K562 (cell line): ENCODE measurements at regions of chr3 and their contacts with region 1.

Region 1: DNA sequence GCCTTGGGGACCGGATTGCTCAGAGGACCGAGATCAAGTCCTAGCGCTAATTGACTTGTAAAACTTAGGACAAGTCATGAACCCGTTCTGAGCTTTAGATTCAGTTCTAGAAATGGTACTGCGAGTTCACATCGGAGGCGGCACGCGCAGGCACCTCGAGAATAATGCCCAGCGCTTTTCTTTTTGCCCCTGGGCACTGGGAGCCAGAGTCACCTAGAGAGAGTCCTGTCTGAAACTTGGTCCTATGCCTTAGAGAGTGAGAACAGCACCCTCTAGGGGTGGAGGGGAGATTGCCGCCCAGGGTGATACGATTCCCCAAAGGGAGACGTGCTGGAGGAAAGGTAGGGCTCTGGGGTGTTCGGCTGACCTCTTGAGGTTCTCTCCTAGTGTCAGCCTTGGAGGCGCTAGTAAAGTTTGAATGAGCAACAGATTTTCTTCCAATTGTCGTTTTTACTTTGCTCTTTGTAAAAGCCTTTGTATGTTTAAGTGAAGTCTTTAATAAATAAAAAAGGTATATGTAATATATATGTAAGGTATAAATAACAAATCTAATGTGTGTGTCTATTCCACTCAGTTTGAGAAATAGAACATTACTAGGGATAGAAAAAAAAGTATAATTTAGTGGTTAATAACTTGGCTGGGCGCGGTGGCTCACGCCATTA is 826 bp downstream of the EEF1AKMT4 start:
- DNase-seq: peak; percentile 72 to 97 (median 82)
- ATAC-seq: peak; percentile 86
- H3K4me3 ChIP-seq: peak overlapping the region; percentile 96
- H3K27ac ChIP-seq: peak overlapping the region; percentile 95
- H3K4me1 ChIP-seq: peaks cover 3 to 9% of the 10 kb centered on the region in 2 experiments; a peak in 3 of 5 replicates
- H3K27me3 ChIP-seq: no peaks in the 10 kb centered on the region
- CTCF ChIP-seq: peak; percentile 93 to 97 (median 97)
- EP300 ChIP-seq: no peak; the same call in 1 of the 2 replicates
- POLR2A ChIP-seq: no peak
- RAD21 ChIP-seq: peak; percentile 63 to 74

Region 2: GRCh38 chr3:183122257-183122932 is 1127.9 kb before region 1 on chr3:
- CTCF ChIA-PET with region 1: no interaction called
- POLR2A ChIA-PET with region 1: no interaction called
- in situ Hi-C with region 1: no loop called
- intact Hi-C with region 1: no loop called
- DNase-seq: peak; percentile 54 to 67 (median 56)
- ATAC-seq: peak; percentile 73
- H3K4me3 ChIP-seq: no peak overlapping the region
- H3K27ac ChIP-seq: no peak overlapping the region
- H3K4me1 ChIP-seq: no peaks in the 10 kb centered on the region
- H3K27me3 ChIP-seq: peaks cover 0 to 5% of the 10 kb centered on the region in 2 experiments; a peak in 1 of 5 replicates
- CTCF ChIP-seq: peak; percentile 65 to 91 (median 69); a peak in 5 of 6 replicates
- EP300 ChIP-seq: no peak
- POLR2A ChIP-seq: no peak
- RAD21 ChIP-seq: peak; percentile 93

Region 3: GRCh38 chr3:183895296-183895695 is 355.0 kb before region 1 on chr3:
- CTCF ChIA-PET with region 1: interaction called, 9 read pairs
- POLR2A ChIA-PET with region 1: interaction called, 3 read pairs
- in situ Hi-C with region 1: no loop called
- intact Hi-C with region 1: loop called (anchors 2 kb)
- DNase-seq: peak; percentile 63 to 80 (median 76)
- ATAC-seq: peak; percentile 85
- H3K4me3 ChIP-seq: no peak overlapping the region
- H3K27ac ChIP-seq: no peak overlapping the region
- H3K4me1 ChIP-seq: 0 out of 5 replicates have a peak, but pooled peaks cover 0 to 3% of the 10 kb centered on the region in 2 experiments
- H3K27me3 ChIP-seq: peaks cover 19 to 35% of the 10 kb centered on the region in 2 experiments; a peak in 4 of 5 replicates
- CTCF ChIP-seq: peak; percentile 79 to 95 (median 83)
- EP300 ChIP-seq: no peak
- POLR2A ChIP-seq: no peak
- RAD21 ChIP-seq: peak; percentile 79 to 80

Region 4: GRCh38 chr3:184017672-184018423 is 232.4 kb before region 1 on chr3 and contains the start of gene ABCC5:
- CTCF ChIA-PET with region 1: interaction called, 3 read pairs
- POLR2A ChIA-PET with region 1: no interaction called
- in situ Hi-C with region 1: loop called (anchors 10 kb)
- intact Hi-C with region 1: loop called (anchors 5 kb)
- DNase-seq: peak; percentile 85 to 95 (median 89)
- ATAC-seq: peak; percentile 95
- H3K4me3 ChIP-seq: peak within 1 kb of the TSS; percentile 89
- H3K27ac ChIP-seq: peak within 1 kb of the TSS; percentile 90
- H3K4me1 ChIP-seq: peaks cover 20 to 25% of the 10 kb centered on the region in 2 experiments; a peak in 4 of 5 replicates
- H3K27me3 ChIP-seq: no peaks in the 10 kb centered on the region
- CTCF ChIP-seq: 0 out of 6 replicates have a peak, but pooled peaks of 1 of the 3 experiments have one; percentile 21
- EP300 ChIP-seq: peak; percentile 91
- POLR2A ChIP-seq: peak; percentile 85
- RAD21 ChIP-seq: no peak
- polyA plus RNA-seq, gene ABCC5: 41.9 to 53.0 TPM

Region 5: DNA sequence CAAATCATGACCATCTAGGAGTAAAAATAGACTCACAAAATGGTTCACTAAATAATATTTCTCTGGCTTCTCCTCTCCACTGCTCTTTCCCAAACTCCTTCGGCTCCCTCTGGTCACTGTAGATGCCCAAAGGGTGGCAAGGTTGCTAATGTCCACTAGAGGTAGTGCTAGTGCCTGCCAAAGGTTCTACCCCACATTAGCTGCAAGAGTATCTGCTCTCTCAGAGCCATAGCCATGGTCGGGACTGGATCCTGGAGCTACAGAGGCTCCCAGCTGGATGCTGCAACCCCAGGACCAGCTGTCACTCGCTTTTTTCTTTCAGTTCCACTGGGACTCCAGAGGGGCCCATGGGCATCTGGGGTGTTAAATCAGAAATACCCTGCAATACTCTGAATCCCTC is 210.3 kb before region 1 on chr3:
- CTCF ChIA-PET with region 1: no interaction called
- POLR2A ChIA-PET with region 1: no interaction called
- in situ Hi-C with region 1: no loop called
- intact Hi-C with region 1: loop called (anchors 10 kb)
- DNase-seq: peak; percentile 22 to 53 (median 34)
- ATAC-seq: peak; percentile 94
- H3K4me3 ChIP-seq: no peak overlapping the region
- H3K27ac ChIP-seq: no peak overlapping the region
- H3K4me1 ChIP-seq: no peaks in the 10 kb centered on the region
- H3K27me3 ChIP-seq: peaks cover 0 to 5% of the 10 kb centered on the region in 2 experiments; a peak in 2 of 5 replicates
- CTCF ChIP-seq: peak; percentile 66 to 79 (median 68)
- EP300 ChIP-seq: no peak
- POLR2A ChIP-seq: no peak
- RAD21 ChIP-seq: peak; percentile 79 to 82

Region 6: DNA sequence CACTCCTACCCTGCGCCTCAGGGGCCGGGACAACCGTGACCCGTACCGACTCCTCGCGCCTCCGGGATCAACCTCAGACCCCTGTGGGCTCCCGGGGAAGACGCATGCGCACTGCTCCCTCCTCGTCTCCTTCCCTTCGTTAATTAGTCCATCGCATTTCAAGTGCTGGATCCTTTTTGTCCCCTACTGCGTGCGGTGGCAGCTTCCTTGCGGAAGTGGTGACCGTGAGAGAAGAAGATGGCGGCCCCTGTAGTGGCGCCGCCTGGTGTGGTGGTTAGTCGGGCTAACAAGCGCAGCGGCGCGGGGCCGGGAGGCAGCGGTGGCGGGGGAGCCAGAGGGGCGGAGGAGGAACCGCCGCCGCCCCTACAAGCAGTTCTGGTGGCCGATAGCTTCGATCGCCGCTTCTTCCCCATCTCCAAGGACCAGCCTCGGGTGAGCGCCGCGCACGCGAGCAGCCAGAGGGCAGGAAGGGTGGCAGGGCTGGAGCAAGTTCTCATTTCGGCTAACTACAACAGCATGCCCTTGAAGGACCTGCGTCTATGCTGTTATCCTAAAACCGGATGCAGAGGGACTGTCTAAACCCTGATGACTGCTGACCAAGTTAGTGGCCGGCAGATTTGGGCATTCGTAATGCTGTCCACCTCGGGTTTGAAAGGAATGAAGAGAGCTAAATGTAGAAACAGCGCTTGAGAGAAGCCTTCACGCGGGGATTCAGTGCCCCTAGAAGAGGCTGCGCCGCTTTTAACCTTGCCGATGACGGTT is 115.0 kb before region 1 on chr3 and contains the start of gene EIF2B5:
- CTCF ChIA-PET with region 1: no interaction called
- POLR2A ChIA-PET with region 1: no interaction called
- in situ Hi-C with region 1: no loop called
- intact Hi-C with region 1: loop called (anchors 5 kb)
- DNase-seq: peak; percentile 90 to 96 (median 92)
- ATAC-seq: peak; percentile 90
- H3K4me3 ChIP-seq: peak within 1 kb of the TSS; percentile 97
- H3K27ac ChIP-seq: peak within 1 kb of the TSS; percentile 92
- H3K4me1 ChIP-seq: peaks cover 7 to 13% of the 10 kb centered on the region in 2 experiments; a peak in 4 of 5 replicates
- H3K27me3 ChIP-seq: no peaks in the 10 kb centered on the region; a peak in 1 of 5 replicates
- CTCF ChIP-seq: peak; percentile 29 to 49 (median 31); a peak in 5 of 6 replicates
- EP300 ChIP-seq: peak; percentile 51
- POLR2A ChIP-seq: peak; percentile 92
- RAD21 ChIP-seq: peak; percentile 20 to 28; a peak in 3 of 4 replicates
- polyA plus RNA-seq, gene EIF2B5: 19.1 to 31.8 TPM

Region 7: DNA sequence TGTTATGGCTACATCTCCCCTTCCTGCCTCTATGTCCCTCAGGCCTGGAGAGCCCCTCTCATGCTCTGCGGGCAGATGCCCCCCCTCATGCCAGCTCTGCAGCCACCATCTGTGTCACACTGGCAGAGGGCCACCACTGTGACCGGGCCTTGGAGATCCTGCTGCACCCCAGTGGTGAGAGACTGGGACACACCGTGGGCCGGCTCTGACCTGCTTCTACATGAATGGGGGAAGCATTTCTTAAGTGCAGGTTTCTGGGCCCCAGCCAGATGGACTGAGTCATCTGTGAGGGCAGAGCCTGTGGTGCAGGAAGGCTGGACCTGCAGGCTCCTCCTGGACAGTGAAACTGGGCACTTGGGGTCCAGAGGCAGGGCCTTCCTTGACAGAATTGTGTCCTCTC is 16.1 kb before region 1 on chr3:
- CTCF ChIA-PET with region 1: no interaction called
- POLR2A ChIA-PET with region 1: no interaction called
- in situ Hi-C with region 1: no loop called
- intact Hi-C with region 1: no loop called
- DNase-seq: peak; percentile 43 to 68 (median 54)
- ATAC-seq: peak; percentile 77
- H3K4me3 ChIP-seq: no peak overlapping the region
- H3K27ac ChIP-seq: no peak overlapping the region
- H3K4me1 ChIP-seq: peaks cover 0 to 39% of the 10 kb centered on the region in 2 experiments; a peak in 3 of 5 replicates
- H3K27me3 ChIP-seq: peaks cover 32 to 63% of the 10 kb centered on the region in 2 experiments
- CTCF ChIP-seq: peak in 2 of 3 experiments; percentile 13 to 17; a peak in 2 of 6 replicates
- EP300 ChIP-seq: no peak
- POLR2A ChIP-seq: no peak
- RAD21 ChIP-seq: peak in 1 of 2 experiments; percentile 23; a peak in 1 of 4 replicates

Region 8: GRCh38 chr3:184289426-184289938 is 39.2 kb after region 1 on chr3:
- CTCF ChIA-PET with region 1: interaction called, 8 read pairs
- POLR2A ChIA-PET with region 1: no interaction called
- in situ Hi-C with region 1: no loop called
- intact Hi-C with region 1: loop called (anchors 2 kb)
- DNase-seq: peak; percentile 75 to 82 (median 78)
- ATAC-seq: peak; percentile 90
- H3K4me3 ChIP-seq: no peak overlapping the region
- H3K27ac ChIP-seq: no peak overlapping the region
- H3K4me1 ChIP-seq: peaks cover 0 to 12% of the 10 kb centered on the region in 2 experiments; a peak in 2 of 5 replicates
- H3K27me3 ChIP-seq: peaks cover 23 to 47% of the 10 kb centered on the region in 2 experiments
- CTCF ChIP-seq: peak; percentile 84 to 92 (median 84)
- EP300 ChIP-seq: no peak
- POLR2A ChIP-seq: no peak
- RAD21 ChIP-seq: peak; percentile 76 to 87

Region 9: DNA sequence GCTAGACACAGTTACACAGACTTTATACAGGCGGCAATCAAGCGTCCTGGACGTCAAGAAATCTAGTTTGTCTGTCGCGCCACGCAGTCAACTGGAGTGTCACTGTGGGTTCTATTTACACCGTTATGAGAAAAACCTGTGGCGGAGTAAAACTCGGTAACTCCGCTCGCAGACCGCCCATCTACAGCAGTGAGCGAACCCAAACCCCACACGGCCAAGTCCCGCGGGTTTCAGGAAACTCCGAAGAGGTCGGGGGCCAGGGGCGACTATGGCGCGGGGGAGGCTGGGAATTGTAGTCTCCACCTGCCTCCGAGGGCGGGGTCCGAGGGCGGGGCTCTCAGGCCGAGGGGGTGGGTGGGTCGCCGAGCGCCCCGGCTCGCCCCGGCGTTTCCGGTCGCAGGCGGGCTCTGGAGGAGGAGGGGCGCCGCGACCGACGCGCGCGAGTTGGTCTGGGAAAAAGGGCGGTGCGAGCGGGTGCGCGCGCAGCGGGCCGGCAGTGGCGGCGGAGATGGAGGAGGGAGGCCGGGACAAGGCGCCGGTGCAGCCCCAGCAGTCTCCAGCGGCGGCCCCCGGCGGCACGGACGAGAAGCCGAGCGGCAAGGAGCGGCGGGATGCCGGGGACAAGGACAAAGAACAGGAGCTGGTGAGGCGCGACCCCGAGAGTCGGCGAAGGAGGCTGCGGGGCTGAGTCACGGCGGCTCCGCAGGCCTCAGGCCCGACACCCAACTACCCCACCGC is 48.6 kb after region 1 on chr3 and contains the start of gene PSMD2:
- CTCF ChIA-PET with region 1: no interaction called
- POLR2A ChIA-PET with region 1: interaction called, 3 read pairs
- in situ Hi-C with region 1: no loop called
- intact Hi-C with region 1: loop called (anchors 2 kb)
- DNase-seq: peak; percentile 97 to 99 (median 98)
- ATAC-seq: peak; percentile 98
- H3K4me3 ChIP-seq: peak within 1 kb of the TSS; percentile 84
- H3K27ac ChIP-seq: peak within 1 kb of the TSS; percentile 88
- H3K4me1 ChIP-seq: peaks cover 7 to 9% of the 10 kb centered on the region in 2 experiments; a peak in 4 of 5 replicates
- H3K27me3 ChIP-seq: no peaks in the 10 kb centered on the region
- CTCF ChIP-seq: no peak
- EP300 ChIP-seq: no peak
- POLR2A ChIP-seq: peak; percentile 91
- RAD21 ChIP-seq: no peak
- polyA plus RNA-seq, gene PSMD2: 152 to 173 TPM